ENCODE measurements at regions of chr5 and their contacts with region 1.

Region 1: GRCh38 chr5:36695677-36696673 is 89.6 kb downstream of the SLC1A3 start:
- DNase-seq: no peak

Region 2: DNA sequence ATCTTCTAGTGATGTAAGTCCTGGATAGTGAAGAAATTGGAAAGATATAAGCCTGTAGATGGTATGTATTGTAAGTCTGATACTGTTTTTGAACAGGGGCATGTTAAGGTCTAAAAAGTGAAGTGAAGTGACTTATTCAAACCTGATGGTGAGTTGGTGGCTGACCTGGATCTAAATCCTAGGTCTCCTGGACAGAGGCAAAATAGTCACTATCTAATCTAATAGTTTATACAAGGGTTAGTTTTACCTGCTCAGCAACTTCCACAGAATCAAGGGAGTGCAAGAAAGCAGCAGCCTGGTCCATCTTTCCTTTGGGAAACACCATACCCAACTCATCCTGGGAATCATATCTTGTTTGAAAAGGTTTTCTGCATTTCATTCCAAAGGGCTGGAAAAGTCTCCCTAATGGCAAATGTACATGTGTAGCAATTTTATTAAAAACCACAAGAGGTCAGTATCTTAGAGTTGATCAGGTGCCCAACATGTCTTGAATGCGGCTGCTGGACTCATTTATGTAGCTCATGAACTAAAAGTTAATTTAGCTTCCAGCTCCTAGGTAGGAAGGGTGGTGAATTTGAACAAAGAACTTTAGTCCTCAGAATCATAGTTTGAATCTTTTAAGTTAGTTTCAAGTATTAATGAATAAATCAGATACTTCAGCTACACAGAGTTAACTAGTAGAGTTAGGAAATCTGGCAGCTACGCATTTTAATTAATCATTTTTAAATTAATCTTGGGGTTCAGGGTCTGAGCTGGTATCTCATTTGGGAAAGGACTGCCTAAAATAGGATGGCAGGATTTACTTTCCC is 518.1 kb before region 1 on chr5:
- intact Hi-C with region 1: loop called (anchors 5 kb)
- DNase-seq: no peak

Region 3: GRCh38 chr5:36614657-36615308 is 81.2 kb before region 1 on chr5:
- intact Hi-C with region 1: no loop called
- DNase-seq: no peak